Posterior vena cava (tissue), 2 donors: ENCODE measurements at regions of chr11 and their contacts with region 1.

Region 1: GRCh38 chr11:84345597-84345996 is 1059.4 kb upstream of the CCDC90B start:
- DNase-seq: no peak

Region 2: GRCh38 chr11:84289381-84289906 is 56.2 kb before region 1 on chr11:
- intact Hi-C with region 1: loop called in 1 of 2 experiments (anchors 2 kb)
- DNase-seq: no peak